Ascending aorta (tissue), 2 donors: ENCODE measurements at regions of chr2 and their contacts with region 1.

Region 1: GRCh38 chr2:68441179-68441993 is 25.7 kb downstream of the FBXO48 start:
- DNase-seq: peak; percentile 43 to 92
- H3K4me3 ChIP-seq: no peak overlapping the region
- H3K27ac ChIP-seq: peak overlapping the region; percentile 52 to 60
- H3K4me1 ChIP-seq: peaks cover 0 to 13% of the 10 kb centered on the region in 2 donors
- H3K27me3 ChIP-seq: no peaks in the 10 kb centered on the region
- CTCF ChIP-seq: peak; percentile 81 to 90 (median 86)

Region 2: GRCh38 chr2:68121873-68122679 is 319.3 kb before region 1 on chr2:
- intact Hi-C with region 1: loop called (anchors 1 kb)
- DNase-seq: peak; percentile 22 to 92
- H3K4me3 ChIP-seq: no peak overlapping the region
- H3K27ac ChIP-seq: no peak overlapping the region
- H3K4me1 ChIP-seq: no peaks in the 10 kb centered on the region
- H3K27me3 ChIP-seq: no peaks in the 10 kb centered on the region
- CTCF ChIP-seq: peak; percentile 81 to 96 (median 90)

Region 3: GRCh38 chr2:68196120-68196716 is 245.2 kb before region 1 on chr2:
- intact Hi-C with region 1: loop called (anchors 5 kb)
- DNase-seq: no peak
- H3K4me3 ChIP-seq: no peak overlapping the region
- H3K27ac ChIP-seq: no peak overlapping the region
- H3K4me1 ChIP-seq: peaks cover 0 to 25% of the 10 kb centered on the region in 2 donors
- H3K27me3 ChIP-seq: no peaks in the 10 kb centered on the region
- CTCF ChIP-seq: peak; percentile 53 to 74 (median 58)

Region 4: DNA sequence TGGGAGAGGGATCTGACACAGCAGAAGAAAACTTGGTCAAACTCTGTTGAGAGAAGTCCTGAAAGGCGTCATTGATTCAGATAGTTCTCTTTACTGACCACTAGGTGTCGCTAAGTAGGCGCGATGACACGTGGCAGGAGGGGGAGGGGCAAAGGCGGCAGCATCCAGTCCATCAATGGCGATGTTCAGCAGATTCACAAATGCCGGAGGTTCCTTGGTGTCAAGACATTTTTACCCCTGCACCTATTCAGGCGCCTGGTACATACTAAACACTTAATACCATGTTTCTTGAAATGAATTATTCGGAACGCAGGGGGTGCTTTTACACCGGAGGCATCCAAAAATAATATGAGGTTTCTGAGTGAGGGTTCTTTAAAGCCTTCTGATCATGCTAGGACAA is 79.3 kb before region 1 on chr2:
- intact Hi-C with region 1: loop called (anchors 1 kb)
- DNase-seq: peak in 1 of 2 donors; percentile 80
- H3K4me3 ChIP-seq: no peak overlapping the region
- H3K27ac ChIP-seq: no peak overlapping the region
- H3K4me1 ChIP-seq: no peaks in the 10 kb centered on the region
- H3K27me3 ChIP-seq: no peaks in the 10 kb centered on the region
- CTCF ChIP-seq: peak; percentile 43 to 69 (median 59)

Region 5: DNA sequence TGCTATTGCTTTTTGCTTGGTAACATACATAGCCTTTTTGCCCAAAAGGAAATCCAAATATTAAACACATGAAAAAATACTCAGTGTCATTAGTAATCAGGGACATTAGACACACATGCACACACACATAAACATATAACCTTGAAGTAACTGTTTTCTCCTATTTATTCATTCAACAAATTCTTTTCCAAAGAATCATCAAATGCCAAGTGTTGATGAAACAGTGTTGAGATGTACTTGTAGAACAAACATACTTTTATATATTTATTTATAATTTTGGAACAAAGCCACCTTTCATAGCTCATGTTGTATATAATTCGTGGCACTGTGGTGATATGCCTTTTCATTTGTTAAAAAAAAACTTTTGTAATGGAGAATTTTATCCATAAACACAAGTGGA is 107.0 kb after region 1 on chr2:
- intact Hi-C with region 1: no loop called
- DNase-seq: no peak
- H3K4me3 ChIP-seq: no peak overlapping the region
- H3K27ac ChIP-seq: no peak overlapping the region
- H3K4me1 ChIP-seq: no peaks in the 10 kb centered on the region
- H3K27me3 ChIP-seq: no peaks in the 10 kb centered on the region
- CTCF ChIP-seq: no peak